ENCODE measurements at regions of chr19 and their contacts with region 1.

Region 1: DNA sequence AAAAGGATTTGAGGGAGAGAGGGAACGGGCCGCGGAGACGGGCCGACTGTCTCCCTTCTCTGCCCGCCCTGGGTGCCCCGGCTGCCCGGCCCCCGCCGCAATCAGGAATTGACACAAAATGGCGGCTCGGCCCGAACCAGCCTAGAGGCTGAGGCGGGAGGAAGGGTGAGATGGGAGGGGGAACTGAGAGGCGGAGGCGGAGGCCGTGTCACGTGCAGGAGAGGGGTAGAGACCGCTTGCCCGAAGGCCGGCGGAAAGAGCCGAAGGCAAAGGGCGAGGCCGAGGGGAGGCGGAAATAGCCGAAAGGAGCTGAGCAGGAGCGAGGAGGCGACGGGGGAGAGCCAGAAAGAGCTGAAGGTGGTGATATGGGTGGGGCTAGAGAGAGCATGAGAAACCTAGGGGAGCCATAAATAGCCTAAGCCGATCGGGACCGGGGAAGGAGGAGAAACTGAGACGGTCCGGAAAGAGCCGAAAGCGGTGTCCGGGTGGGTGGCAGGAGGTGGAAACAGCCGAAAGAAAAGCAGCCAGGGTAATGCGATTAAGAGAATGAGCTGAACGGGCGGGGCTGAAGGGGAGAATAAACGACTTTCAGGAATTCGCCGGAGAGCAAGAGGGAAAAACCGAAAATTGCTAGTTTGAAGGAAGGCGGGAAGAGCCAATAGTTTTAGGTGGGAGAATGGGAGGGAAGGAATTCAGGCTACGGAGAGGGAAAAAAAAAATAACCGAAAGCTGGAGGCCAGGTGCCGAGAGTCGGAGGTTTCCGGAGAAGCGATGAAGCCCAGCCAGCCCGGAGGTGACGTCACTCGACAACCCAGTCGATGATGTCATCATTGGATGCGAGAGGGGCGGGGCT is at the start of gene ZC3H4:
- DNase-seq: peak; percentile 98 to 100 (median 99)
- ATAC-seq: peak; percentile 82
- H3K4me3 ChIP-seq: peak within 1 kb of the TSS; percentile 82
- H3K4me3 Mint-ChIP-seq: peak within 1 kb of the TSS; percentile 98
- H3K27ac ChIP-seq: peak within 1 kb of the TSS; percentile 99 to 100
- H3K27ac Mint-ChIP-seq: peak within 1 kb of the TSS; percentile 98
- H3K4me1 ChIP-seq: peaks cover 24% of the 10 kb centered on the region
- H3K4me1 Mint-ChIP-seq: peaks cover 37% of the 10 kb centered on the region
- H3K27me3 ChIP-seq: no peaks in the 10 kb centered on the region
- H3K27me3 Mint-ChIP-seq: no peaks in the 10 kb centered on the region
- CTCF ChIP-seq: no peak
- total RNA-seq, gene ZC3H4: 39.4 to 43.7 TPM

Region 2: GRCh38 chr19:46717034-46717723 is 396.0 kb before region 1 on chr19 and contains the start of gene PRKD2:
- CTCF ChIA-PET with region 1: no interaction called
- POLR2A ChIA-PET with region 1: interaction called, 14 read pairs
- intact Hi-C with region 1: no loop called
- DNase-seq: peak; percentile 73 to 94 (median 84)
- ATAC-seq: peak; percentile 45
- H3K4me3 ChIP-seq: peak within 1 kb of the TSS; percentile 96
- H3K4me3 Mint-ChIP-seq: peak within 1 kb of the TSS; percentile 99
- H3K27ac ChIP-seq: peak within 1 kb of the TSS; percentile 86 to 91
- H3K27ac Mint-ChIP-seq: peak within 1 kb of the TSS; percentile 99
- H3K4me1 ChIP-seq: peaks cover 56% of the 10 kb centered on the region
- H3K4me1 Mint-ChIP-seq: peaks cover 43% of the 10 kb centered on the region
- H3K27me3 ChIP-seq: no peaks in the 10 kb centered on the region
- H3K27me3 Mint-ChIP-seq: no peaks in the 10 kb centered on the region
- CTCF ChIP-seq: no peak
- total RNA-seq, gene PRKD2: 105 to 113 TPM

Region 3: DNA sequence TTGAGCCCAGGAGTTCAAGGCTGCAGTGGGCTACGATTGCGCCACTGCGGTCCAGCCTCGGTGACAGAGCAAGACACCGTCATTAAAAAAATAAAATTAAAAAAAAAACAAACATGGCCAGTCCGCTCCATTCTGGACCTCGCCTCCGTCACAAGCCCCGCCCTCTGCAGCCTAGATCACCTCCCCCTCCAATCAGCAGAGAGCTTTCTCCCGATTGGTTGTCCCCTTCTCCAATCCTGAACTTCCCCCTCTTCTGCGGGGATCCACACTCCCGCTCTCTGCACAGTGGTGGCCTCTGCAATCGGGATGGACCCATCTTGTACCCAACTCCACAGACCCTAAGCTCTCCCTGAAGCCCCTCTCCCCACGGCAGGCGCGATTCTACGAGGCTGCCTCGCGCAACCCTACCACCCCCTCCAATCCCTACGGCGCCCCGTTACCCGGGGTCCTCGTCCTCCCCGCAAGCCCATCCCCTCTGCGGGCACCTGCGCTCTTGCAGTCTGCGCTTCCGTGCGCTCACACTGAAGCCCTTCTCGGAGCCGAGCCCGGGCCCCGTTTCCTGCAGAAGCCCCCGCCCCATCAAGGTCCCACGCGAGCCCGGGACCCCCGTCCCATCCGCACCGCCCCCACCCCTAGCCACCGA is 65.3 kb before region 1 on chr19:
- CTCF ChIA-PET with region 1: no interaction called
- POLR2A ChIA-PET with region 1: interaction called, 28 read pairs
- intact Hi-C with region 1: loop called (anchors 2 kb)
- DNase-seq: peak; percentile 24 to 86 (median 50)
- ATAC-seq: peak; percentile 38
- H3K4me3 ChIP-seq: peak overlapping the region; percentile 88
- H3K4me3 Mint-ChIP-seq: peak overlapping the region; percentile 98
- H3K27ac ChIP-seq: peak overlapping the region in 1 of 2 donors; percentile 81
- H3K27ac Mint-ChIP-seq: peak overlapping the region; percentile 54
- H3K4me1 ChIP-seq: peaks cover 16% of the 10 kb centered on the region
- H3K4me1 Mint-ChIP-seq: peaks cover 10% of the 10 kb centered on the region
- H3K27me3 ChIP-seq: no peaks in the 10 kb centered on the region
- H3K27me3 Mint-ChIP-seq: no peaks in the 10 kb centered on the region
- CTCF ChIP-seq: no peak

Region 4: DNA sequence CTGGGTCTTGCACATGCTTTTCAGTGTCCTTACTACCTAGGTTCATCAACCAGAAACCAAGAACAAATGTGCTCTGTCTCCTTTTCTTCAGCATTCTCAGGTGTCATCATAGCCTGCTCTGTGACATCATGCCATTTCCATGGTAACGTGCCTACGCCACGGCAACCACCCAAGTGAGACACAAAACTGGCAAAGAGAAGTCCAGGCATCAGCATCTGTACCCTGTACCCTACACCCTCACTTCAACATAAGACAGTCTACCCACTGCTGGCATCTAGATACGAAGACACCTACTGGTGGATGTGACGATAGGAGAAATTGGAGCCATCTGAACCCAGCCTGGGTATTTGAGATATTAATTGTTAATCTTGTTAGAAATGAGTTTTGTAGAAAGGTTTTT is 12.9 kb before region 1 on chr19:
- CTCF ChIA-PET with region 1: interaction called, 3 read pairs
- POLR2A ChIA-PET with region 1: interaction called, 124 read pairs
- intact Hi-C with region 1: loop called in 1 of 2 experiments (anchors 2 kb)
- DNase-seq: peak in 2 of 14 experiments; percentile 49 to 50
- ATAC-seq: peak; percentile 34
- H3K4me3 ChIP-seq: no peak overlapping the region
- H3K4me3 Mint-ChIP-seq: no peak overlapping the region
- H3K27ac ChIP-seq: no peak overlapping the region
- H3K27ac Mint-ChIP-seq: peak overlapping the region; percentile 54
- H3K4me1 ChIP-seq: peaks cover 40% of the 10 kb centered on the region
- H3K4me1 Mint-ChIP-seq: peaks cover 56% of the 10 kb centered on the region
- H3K27me3 ChIP-seq: no peaks in the 10 kb centered on the region
- H3K27me3 Mint-ChIP-seq: no peaks in the 10 kb centered on the region
- CTCF ChIP-seq: no peak

Region 5: GRCh38 chr19:47143322-47144073 is 30.3 kb after region 1 on chr19:
- CTCF ChIA-PET with region 1: interaction called, 3 read pairs
- POLR2A ChIA-PET with region 1: interaction called, 25 read pairs
- intact Hi-C with region 1: no loop called
- DNase-seq: no peak
- ATAC-seq: no peak
- H3K4me3 ChIP-seq: no peak overlapping the region
- H3K4me3 Mint-ChIP-seq: no peak overlapping the region
- H3K27ac ChIP-seq: no peak overlapping the region
- H3K27ac Mint-ChIP-seq: no peak overlapping the region
- H3K4me1 ChIP-seq: peaks cover 42% of the 10 kb centered on the region
- H3K4me1 Mint-ChIP-seq: peaks cover 56% of the 10 kb centered on the region
- H3K27me3 ChIP-seq: no peaks in the 10 kb centered on the region
- H3K27me3 Mint-ChIP-seq: no peaks in the 10 kb centered on the region
- CTCF ChIP-seq: no peak

Region 6: GRCh38 chr19:47225746-47226425 is 112.7 kb after region 1 on chr19:
- CTCF ChIA-PET with region 1: no interaction called
- POLR2A ChIA-PET with region 1: interaction called, 19 read pairs
- intact Hi-C with region 1: no loop called
- DNase-seq: peak; percentile 79 to 95 (median 86)
- ATAC-seq: peak; percentile 54
- H3K4me3 ChIP-seq: peak overlapping the region; percentile 56
- H3K4me3 Mint-ChIP-seq: peak overlapping the region; percentile 72
- H3K27ac ChIP-seq: peak overlapping the region in 1 of 2 donors; percentile 85
- H3K27ac Mint-ChIP-seq: peak overlapping the region; percentile 85
- H3K4me1 ChIP-seq: peaks cover 48% of the 10 kb centered on the region
- H3K4me1 Mint-ChIP-seq: peaks cover 15% of the 10 kb centered on the region
- H3K27me3 ChIP-seq: no peaks in the 10 kb centered on the region
- H3K27me3 Mint-ChIP-seq: no peaks in the 10 kb centered on the region
- CTCF ChIP-seq: no peak

Region 7: DNA sequence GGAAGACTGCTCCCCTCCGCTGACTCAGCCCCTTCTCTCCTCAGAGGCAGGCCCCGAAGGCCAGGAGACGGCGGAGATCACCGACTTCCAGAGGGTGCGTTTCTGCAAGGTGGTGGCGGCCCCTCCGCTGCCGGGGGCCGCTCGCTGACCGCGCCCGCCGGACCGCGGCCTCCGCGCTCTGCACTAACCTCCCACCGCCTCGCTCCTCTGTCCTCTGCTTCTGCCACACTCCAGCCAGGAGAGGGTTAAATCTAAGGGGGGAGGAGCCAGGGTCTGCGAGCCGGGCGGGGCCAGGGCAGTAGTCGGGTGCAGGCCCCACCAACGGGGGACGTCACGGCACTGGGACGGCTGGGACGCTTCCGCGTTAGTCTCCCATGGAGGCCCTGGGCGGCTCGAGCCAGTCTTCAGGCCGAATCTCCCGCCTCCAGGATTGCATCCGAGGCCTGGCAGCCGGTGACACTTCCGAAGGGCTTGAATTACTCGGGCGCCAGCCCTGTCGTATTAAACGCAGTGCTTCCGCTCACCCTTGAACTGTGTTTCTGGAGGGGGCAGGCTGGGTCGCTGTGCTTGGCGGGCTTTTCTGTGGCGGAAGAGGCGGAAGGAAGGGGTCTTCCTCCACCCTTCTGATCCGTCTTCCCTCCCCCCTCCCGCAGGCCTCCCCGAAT is 160.2 kb after region 1 on chr19:
- CTCF ChIA-PET with region 1: no interaction called
- POLR2A ChIA-PET with region 1: interaction called, 43 read pairs
- intact Hi-C with region 1: no loop called
- DNase-seq: peak; percentile 82 to 95 (median 88)
- ATAC-seq: peak; percentile 63
- H3K4me3 ChIP-seq: peak overlapping the region; percentile 100
- H3K4me3 Mint-ChIP-seq: peak overlapping the region; percentile 100
- H3K27ac ChIP-seq: peak overlapping the region; percentile 92 to 99
- H3K27ac Mint-ChIP-seq: peak overlapping the region; percentile 99
- H3K4me1 ChIP-seq: peaks cover 24% of the 10 kb centered on the region
- H3K4me1 Mint-ChIP-seq: peaks cover 28% of the 10 kb centered on the region
- H3K27me3 ChIP-seq: no peaks in the 10 kb centered on the region
- H3K27me3 Mint-ChIP-seq: no peaks in the 10 kb centered on the region
- CTCF ChIP-seq: no peak

Region 8: GRCh38 chr19:47370045-47370611 is 256.9 kb after region 1 on chr19:
- CTCF ChIA-PET with region 1: no interaction called
- POLR2A ChIA-PET with region 1: no interaction called
- intact Hi-C with region 1: no loop called
- DNase-seq: peak in 2 of 14 experiments; percentile 53 to 63
- ATAC-seq: no peak
- H3K4me3 ChIP-seq: no peak overlapping the region
- H3K4me3 Mint-ChIP-seq: no peak overlapping the region
- H3K27ac ChIP-seq: no peak overlapping the region
- H3K27ac Mint-ChIP-seq: no peak overlapping the region
- H3K4me1 ChIP-seq: peaks cover 3% of the 10 kb centered on the region
- H3K4me1 Mint-ChIP-seq: no peaks in the 10 kb centered on the region
- H3K27me3 ChIP-seq: no peaks in the 10 kb centered on the region
- H3K27me3 Mint-ChIP-seq: no peaks in the 10 kb centered on the region
- CTCF ChIP-seq: no peak

Measured in CD4-positive, alpha-beta T cell (primary cell).